ENCODE measurements at regions of chr2 and their contacts with region 1.

Region 1: GRCh38 chr2:112794131-112794733 is 9.9 kb upstream of the IL1A start:
- DNase-seq: peak; percentile 97
- H3K4me3 Mint-ChIP-seq: peak overlapping the region; percentile 47
- H3K27ac Mint-ChIP-seq: peak overlapping the region; percentile 98
- H3K4me1 Mint-ChIP-seq: peaks cover 39% of the 10 kb centered on the region
- H3K27me3 Mint-ChIP-seq: no peaks in the 10 kb centered on the region
- CTCF ChIP-seq: no peak

Region 2: GRCh38 chr2:112764071-112765044 is 29.9 kb before region 1 on chr2 and contains the start of gene CKAP2L:
- CTCF ChIA-PET with region 1: interaction called, 3 read pairs
- POLR2A ChIA-PET with region 1: interaction called, 21 read pairs
- intact Hi-C with region 1: no loop called
- DNase-seq: peak; percentile 99
- H3K4me3 Mint-ChIP-seq: peak within 1 kb of the TSS; percentile 97
- H3K27ac Mint-ChIP-seq: peak within 1 kb of the TSS; percentile 95
- H3K4me1 Mint-ChIP-seq: peaks cover 28% of the 10 kb centered on the region
- H3K27me3 Mint-ChIP-seq: no peaks in the 10 kb centered on the region
- CTCF ChIP-seq: no peak
- total RNA-seq, gene CKAP2L: 14.7 and 21.6 TPM in 2 replicates

Region 3: GRCh38 chr2:112811841-112812306 is 17.6 kb after region 1 on chr2:
- CTCF ChIA-PET with region 1: interaction called, 5 read pairs
- POLR2A ChIA-PET with region 1: interaction called, 112 read pairs
- intact Hi-C with region 1: no loop called
- DNase-seq: peak; percentile 82
- H3K4me3 Mint-ChIP-seq: no peak overlapping the region
- H3K27ac Mint-ChIP-seq: peak overlapping the region; percentile 97
- H3K4me1 Mint-ChIP-seq: peaks cover 46% of the 10 kb centered on the region
- H3K27me3 Mint-ChIP-seq: no peaks in the 10 kb centered on the region
- CTCF ChIP-seq: no peak